WTC11 (cell line): ENCODE measurements at regions of chr19 and their contacts with region 1.

Region 1: DNA sequence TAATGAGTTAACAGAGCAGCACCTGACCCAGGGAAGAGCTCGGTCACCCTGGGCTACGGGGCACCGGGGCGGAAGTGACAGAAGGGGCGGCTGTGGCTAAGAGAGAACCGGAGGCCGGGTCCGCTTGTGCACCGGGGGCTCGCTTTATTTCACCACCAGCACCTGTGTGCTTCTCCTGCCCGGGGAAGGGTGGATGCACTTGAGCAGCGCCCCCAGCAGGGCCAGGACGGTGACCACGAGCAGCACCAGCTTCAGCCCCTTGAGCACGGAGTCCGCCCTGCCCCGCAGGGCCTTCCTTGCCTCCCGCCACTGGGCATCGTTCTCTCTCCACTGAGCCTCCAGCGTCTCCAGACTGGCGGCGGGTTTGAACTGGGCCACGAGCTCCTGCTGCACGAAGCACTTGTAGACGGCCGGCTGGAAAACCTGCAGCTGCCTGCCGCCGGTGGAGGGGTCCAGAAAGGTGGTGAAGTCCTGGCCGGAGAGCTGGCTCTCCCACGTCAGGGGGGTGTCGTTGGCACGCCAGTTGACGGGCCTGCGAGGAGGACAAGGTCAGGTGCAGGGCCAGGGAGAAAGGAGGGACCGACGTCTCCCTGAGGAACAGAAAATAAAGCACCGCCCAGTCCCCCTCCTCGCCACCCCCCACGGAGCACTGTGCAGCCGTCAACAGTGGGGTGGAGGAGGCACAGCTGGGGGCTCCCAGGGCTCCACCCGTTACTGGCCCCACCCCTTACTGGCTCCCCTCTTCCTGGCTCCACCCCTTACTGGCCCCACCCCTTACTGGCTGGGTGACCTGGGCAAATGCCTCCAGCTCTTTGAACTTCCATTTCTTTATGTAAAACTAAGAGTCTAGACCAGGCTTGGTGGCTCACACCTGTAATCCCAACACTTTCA is 3.6 kb downstream of the FAM187B start:
- DNase-seq: peak; percentile 70
- ATAC-seq: peak; percentile 84
- H3K4me3 Mint-ChIP-seq: peak overlapping the region; percentile 40
- H3K27ac Mint-ChIP-seq: no peak overlapping the region
- H3K4me1 Mint-ChIP-seq: peaks cover 21% of the 10 kb centered on the region
- H3K27me3 Mint-ChIP-seq: peaks cover 8% of the 10 kb centered on the region
- CTCF ChIP-seq: peak; percentile 23; the same call in 1 of the 2 replicates

Region 2: DNA sequence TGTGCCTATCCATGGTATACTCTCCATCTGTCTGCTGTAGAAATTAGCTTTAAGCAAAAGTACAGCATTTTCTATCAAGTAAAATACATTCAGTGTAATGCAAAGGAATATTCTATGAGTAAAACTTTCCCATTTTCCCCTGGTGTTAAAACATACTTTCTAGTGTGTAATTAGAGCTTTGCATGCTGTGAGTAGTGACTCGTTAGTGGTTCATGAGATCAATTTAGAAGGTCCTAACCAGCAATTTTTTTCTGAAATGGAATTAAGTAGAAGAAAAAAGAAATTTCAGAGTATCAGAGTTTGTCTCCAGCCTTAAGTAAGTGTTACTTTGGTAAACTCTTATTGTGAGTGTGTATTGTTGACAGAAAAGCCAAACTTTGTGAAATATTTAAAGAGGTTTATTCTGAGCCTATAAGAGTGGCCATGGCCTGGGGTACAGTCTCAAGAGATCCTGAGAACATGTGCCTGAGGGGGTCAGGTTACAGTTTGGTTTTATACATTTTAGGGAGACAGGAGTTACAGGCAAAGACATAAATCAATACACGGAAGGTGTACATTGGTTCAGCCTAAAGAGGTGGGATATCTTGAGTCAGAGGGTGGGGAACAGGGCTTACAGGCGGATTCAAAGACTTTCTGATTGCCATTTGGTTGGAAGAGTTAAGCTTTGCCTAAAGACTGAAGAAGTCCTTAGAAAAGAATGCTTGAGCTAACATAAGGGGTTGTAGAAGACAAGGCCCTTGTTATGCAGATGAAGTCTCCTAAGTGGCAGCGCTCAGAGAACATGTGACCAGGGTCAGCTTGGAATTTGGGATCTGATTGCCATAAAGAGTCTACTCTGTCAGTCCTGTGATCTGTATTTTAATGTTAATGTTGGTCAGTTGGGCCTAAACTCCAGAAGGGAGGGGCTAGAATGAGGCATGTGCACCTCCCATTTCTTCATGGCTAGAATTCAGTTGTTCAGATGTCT is 21.9 kb before region 1 on chr19:
- CTCF ChIA-PET with region 1: interaction called, 15 read pairs
- POLR2A ChIA-PET with region 1: no interaction called
- DNase-seq: peak; percentile 54
- ATAC-seq: peak; percentile 91
- H3K4me3 Mint-ChIP-seq: peak overlapping the region; percentile 16
- H3K27ac Mint-ChIP-seq: peak overlapping the region; percentile 98
- H3K4me1 Mint-ChIP-seq: peaks cover 69% of the 10 kb centered on the region
- H3K27me3 Mint-ChIP-seq: peaks cover 10% of the 10 kb centered on the region
- CTCF ChIP-seq: no peak

Region 3: GRCh38 chr19:35236638-35237400 is 11.9 kb after region 1 on chr19:
- CTCF ChIA-PET with region 1: interaction called, 11 read pairs
- POLR2A ChIA-PET with region 1: no interaction called
- DNase-seq: no peak
- ATAC-seq: peak; percentile 72
- H3K4me3 Mint-ChIP-seq: no peak overlapping the region
- H3K27ac Mint-ChIP-seq: no peak overlapping the region
- H3K4me1 Mint-ChIP-seq: no peaks in the 10 kb centered on the region
- H3K27me3 Mint-ChIP-seq: peaks cover 18% of the 10 kb centered on the region
- CTCF ChIP-seq: no peak

Region 4: DNA sequence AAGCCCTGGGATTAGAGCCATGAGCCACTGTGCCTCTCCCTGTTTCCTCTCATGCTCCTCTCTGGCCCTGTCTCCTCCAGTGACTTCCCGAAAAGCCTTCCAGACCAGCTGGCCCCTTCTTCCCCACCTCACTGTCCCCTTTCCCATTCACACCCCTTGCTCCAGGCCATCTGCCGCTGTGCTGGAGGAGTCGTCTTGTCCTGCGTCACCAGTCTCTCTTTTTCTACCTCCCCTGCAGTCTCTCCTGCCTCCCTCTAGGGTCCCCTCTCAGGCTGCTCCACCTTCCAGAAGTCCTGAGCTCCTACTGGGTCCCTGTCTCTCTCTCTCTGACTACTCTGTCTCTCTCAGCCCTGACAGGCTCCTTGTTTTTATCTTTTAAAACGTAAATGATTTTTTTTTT is 117.5 kb after region 1 on chr19:
- CTCF ChIA-PET with region 1: no interaction called
- POLR2A ChIA-PET with region 1: no interaction called
- DNase-seq: no peak
- ATAC-seq: peak; percentile 52
- H3K4me3 Mint-ChIP-seq: no peak overlapping the region
- H3K27ac Mint-ChIP-seq: no peak overlapping the region
- H3K4me1 Mint-ChIP-seq: 0 out of 2 replicates have a peak, but pooled peaks cover 2% of the 10 kb centered on the region
- H3K27me3 Mint-ChIP-seq: no peaks in the 10 kb centered on the region; the same call in 1 of the 2 replicates
- CTCF ChIP-seq: no peak